ENCODE measurements at regions of chr1 and their contacts with region 1.

Region 1: GRCh38 chr1:154546264-154547063 is 12.0 kb downstream of the UBE2Q1 start:
- DNase-seq: no peak
- ATAC-seq: peak; percentile 92
- H3K4me3 ChIP-seq: no peak overlapping the region
- H3K27ac ChIP-seq: no peak overlapping the region
- H3K4me1 ChIP-seq: peaks cover 17% of the 10 kb centered on the region
- H3K27me3 ChIP-seq: no peaks in the 10 kb centered on the region
- CTCF ChIP-seq: peak; percentile 92

Region 2: DNA sequence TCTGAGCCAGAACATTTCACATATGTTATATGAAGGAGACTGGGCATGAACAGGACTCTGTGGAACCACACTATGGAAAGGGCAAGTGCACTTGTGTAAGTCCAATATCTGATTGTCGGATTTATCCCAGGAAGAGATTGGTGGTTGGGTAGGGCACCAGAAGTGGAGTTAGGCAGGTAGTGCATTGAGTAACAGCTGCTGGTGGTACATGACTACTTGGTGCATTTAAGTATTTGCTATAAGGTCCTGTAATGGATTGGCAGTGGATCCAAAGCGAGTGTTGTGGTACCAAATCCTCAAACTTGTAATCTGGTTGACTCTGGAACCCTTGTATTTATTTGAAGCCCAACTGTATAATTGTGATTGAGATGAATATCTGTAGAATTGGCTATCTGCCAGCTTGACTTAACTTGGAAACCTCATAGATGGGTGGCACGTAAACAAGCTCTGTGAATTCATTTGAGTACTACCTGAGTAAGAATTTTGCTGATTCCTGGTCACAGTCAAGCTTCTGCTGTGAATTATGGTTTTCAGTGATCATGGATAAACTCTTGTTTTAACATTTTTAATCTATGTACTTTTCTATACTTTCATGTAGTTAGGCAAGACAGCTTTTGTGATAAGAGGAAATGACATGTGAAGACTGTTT is 304.6 kb before region 1 on chr1:
- CTCF ChIA-PET with region 1: no interaction called
- POLR2A ChIA-PET with region 1: interaction called, 10 read pairs
- in situ Hi-C with region 1: no loop called
- intact Hi-C with region 1: no loop called
- DNase-seq: no peak
- ATAC-seq: no peak
- H3K4me3 ChIP-seq: no peak overlapping the region
- H3K27ac ChIP-seq: no peak overlapping the region
- H3K4me1 ChIP-seq: no peaks in the 10 kb centered on the region
- H3K27me3 ChIP-seq: no peaks in the 10 kb centered on the region
- CTCF ChIP-seq: no peak

Region 3: GRCh38 chr1:154431586-154432373 is 114.7 kb before region 1 on chr1:
- CTCF ChIA-PET with region 1: no interaction called
- POLR2A ChIA-PET with region 1: no interaction called
- in situ Hi-C with region 1: no loop called
- intact Hi-C with region 1: no loop called
- DNase-seq: peak; percentile 78
- ATAC-seq: no peak
- H3K4me3 ChIP-seq: no peak overlapping the region
- H3K27ac ChIP-seq: no peak overlapping the region
- H3K4me1 ChIP-seq: peaks cover 9% of the 10 kb centered on the region
- H3K27me3 ChIP-seq: no peaks in the 10 kb centered on the region
- CTCF ChIP-seq: no peak

Region 4: DNA sequence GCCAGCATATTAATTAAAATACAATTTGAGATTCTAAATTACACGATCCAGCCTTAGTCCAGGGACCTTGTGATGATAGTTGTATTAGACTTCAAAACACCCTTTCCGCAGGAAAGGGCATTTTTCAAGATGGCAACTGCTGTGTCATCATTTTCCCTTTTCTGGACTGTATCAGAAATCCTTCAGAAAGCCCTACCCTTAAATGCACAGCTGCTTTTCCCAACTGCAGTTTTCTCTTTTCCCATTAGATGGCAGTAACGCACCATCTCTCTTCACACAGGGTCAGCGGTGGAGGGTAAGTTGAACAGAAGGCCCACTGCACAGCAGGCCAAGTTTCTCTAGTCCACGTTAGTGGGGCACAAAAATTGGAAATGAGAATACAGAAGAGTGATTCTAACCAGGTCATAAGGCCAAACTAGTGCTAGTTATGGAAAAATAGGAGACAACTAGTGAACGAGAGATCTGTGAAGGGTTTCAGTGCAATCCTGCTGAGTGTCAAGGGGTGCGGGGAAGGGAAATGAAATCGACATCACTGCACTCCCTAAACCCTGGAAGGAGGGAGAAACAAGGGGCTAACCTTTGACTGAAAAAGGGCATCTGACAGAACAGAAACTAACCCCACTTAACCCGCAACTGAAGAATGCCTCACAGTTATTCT is 66.6 kb before region 1 on chr1:
- CTCF ChIA-PET with region 1: interaction called, 42 read pairs
- POLR2A ChIA-PET with region 1: no interaction called
- in situ Hi-C with region 1: no loop called
- intact Hi-C with region 1: loop called (anchors 5 kb)
- DNase-seq: peak; percentile 86
- ATAC-seq: peak; percentile 98
- H3K4me3 ChIP-seq: no peak overlapping the region
- H3K27ac ChIP-seq: no peak overlapping the region
- H3K4me1 ChIP-seq: peaks cover 2% of the 10 kb centered on the region; the same call in 1 of the 2 replicates
- H3K27me3 ChIP-seq: no peaks in the 10 kb centered on the region
- CTCF ChIP-seq: peak; percentile 94

Region 5: GRCh38 chr1:154533952-154534844 is 12.3 kb before region 1 on chr1:
- CTCF ChIA-PET with region 1: interaction called, 14 read pairs
- POLR2A ChIA-PET with region 1: no interaction called
- in situ Hi-C with region 1: no loop called
- intact Hi-C with region 1: no loop called
- DNase-seq: no peak
- ATAC-seq: peak; percentile 87
- H3K4me3 ChIP-seq: no peak overlapping the region
- H3K27ac ChIP-seq: no peak overlapping the region
- H3K4me1 ChIP-seq: no peaks in the 10 kb centered on the region
- H3K27me3 ChIP-seq: peaks cover 2% of the 10 kb centered on the region; the same call in 1 of the 2 replicates
- CTCF ChIP-seq: peak; percentile 86

Measured in Panc1 (cell line).